ENCODE measurements at regions of chr12 and their contacts with region 1.

Region 1: DNA sequence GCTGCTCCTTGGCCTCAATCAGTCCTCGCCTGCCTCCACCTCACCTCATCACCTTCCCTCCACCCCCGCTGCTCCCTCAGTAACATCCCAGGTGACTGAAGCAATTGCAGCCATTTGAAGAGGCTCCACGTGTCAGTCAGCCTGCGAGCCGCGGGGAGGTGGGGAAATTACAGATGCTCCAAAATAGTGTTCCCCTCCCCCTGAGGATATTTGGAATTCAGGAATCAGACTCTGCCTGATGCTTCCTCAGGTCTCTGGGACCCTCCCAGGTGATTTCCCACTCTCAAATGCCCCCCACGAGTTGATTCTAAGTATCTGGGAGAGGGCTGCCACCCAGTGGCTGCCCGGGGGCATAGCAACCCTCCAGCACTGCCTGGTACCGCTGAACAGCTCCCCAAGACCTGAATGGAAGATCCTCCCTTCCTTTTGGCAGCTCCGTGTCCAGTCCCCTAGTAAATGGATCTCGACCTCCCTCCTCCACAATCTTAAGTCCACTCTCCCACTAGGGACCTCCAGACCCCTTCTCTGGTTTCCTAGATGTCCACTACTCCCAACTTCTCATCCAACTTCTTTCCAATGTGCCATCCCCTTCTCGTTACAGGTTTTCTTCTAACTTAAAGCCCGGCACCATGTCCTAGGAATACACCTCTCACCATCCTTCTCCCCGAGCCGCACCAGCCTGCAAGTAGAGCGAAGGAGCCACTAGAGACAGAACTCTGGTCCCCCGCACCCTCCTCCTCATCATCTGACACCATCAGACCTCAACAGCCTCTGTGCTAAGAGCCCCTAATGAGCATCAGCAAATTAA is 1.4 kb upstream of the ASIC1 start:
- DNase-seq: peak; percentile 70
- H3K4me3 Mint-ChIP-seq: peak overlapping the region; percentile 39
- H3K27ac Mint-ChIP-seq: no peak overlapping the region
- H3K4me1 Mint-ChIP-seq: peaks cover 33% of the 10 kb centered on the region
- H3K27me3 Mint-ChIP-seq: peaks cover 41% of the 10 kb centered on the region

Region 2: GRCh38 chr12:49866859-49867579 is 189.0 kb before region 1 on chr12:
- CTCF ChIA-PET with region 1: interaction called, 9 read pairs
- intact Hi-C with region 1: loop called (anchors 1 kb)
- DNase-seq: peak; percentile 86
- H3K4me3 Mint-ChIP-seq: no peak overlapping the region
- H3K27ac Mint-ChIP-seq: no peak overlapping the region
- H3K4me1 Mint-ChIP-seq: no peaks in the 10 kb centered on the region
- H3K27me3 Mint-ChIP-seq: no peaks in the 10 kb centered on the region

Region 3: DNA sequence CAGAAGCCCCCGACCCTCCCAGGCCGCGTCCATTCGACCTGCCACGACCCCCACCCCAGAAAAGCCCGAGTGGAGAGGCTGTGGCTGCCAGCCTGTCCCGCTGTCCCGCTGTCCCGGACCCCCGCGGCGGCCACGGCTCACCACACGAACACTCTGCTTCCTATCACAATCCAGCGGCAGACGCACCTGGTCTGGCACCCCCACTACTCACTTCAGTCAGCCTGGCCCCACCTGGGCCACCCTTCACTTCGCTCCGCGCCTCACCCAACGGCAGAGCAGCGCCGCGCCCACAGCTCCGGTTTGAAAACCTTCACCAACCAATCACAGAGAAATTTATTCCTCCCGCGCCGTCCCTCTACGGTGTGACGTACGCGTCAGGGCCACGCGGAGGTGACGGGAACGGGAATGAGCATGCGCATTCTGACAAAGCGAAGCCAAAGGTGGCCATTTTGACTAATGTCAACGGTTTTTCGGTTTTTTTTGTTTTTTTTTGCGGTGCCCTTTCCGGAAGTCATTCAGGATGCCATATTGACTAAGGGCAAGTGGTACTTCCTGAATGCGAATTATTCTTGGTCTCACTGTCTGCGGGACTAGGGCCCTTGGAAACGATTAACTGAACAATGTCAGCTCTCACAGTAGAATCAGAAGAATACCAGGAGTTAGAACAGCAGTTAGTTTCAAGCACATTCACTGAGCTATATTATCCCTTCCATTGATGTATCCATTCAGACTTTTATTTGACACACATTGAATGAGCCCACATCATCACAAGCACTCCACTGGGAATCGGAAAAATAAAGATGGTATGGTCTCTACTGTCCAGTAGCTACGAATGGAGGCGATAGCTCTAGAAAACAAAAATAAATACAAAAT is 30.6 kb before region 1 on chr12 and contains the start of gene RACGAP1:
- CTCF ChIA-PET with region 1: interaction called, 10 read pairs
- intact Hi-C with region 1: loop called (anchors 1 kb)
- DNase-seq: peak; percentile 98
- H3K4me3 Mint-ChIP-seq: peak within 1 kb of the TSS; percentile 92
- H3K27ac Mint-ChIP-seq: peak within 1 kb of the TSS; percentile 94
- H3K4me1 Mint-ChIP-seq: peaks cover 12% of the 10 kb centered on the region
- H3K27me3 Mint-ChIP-seq: no peaks in the 10 kb centered on the region
- total RNA-seq, gene RACGAP1: 156 to 159 TPM

Region 4: DNA sequence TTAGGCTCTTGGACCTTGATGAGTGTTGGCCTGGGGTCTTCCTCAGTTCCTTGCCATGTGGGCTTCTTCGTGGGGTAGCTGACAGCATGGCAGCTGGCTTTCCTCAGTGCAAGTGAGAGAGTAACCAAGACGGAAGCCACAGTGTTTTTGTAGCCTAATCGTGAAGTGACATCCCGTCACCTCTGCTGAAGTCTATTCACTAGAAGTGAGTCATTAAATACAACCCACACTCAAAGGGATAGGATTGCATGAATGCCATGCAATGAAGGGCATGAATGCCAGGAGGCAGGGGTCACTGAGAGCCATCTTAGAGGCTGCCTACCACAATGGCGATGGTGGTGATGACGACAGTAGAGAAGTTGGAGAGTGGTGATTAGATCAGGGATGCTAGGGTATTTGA is 12.2 kb before region 1 on chr12:
- CTCF ChIA-PET with region 1: interaction called, 182 read pairs
- intact Hi-C with region 1: loop called (anchors 1 kb)
- DNase-seq: no peak
- H3K4me3 Mint-ChIP-seq: no peak overlapping the region
- H3K27ac Mint-ChIP-seq: no peak overlapping the region
- H3K4me1 Mint-ChIP-seq: peaks cover 5% of the 10 kb centered on the region
- H3K27me3 Mint-ChIP-seq: no peaks in the 10 kb centered on the region

Region 5: GRCh38 chr12:50066433-50066832 is 10.4 kb after region 1 on chr12:
- CTCF ChIA-PET with region 1: interaction called, 51 read pairs
- intact Hi-C with region 1: loop called (anchors 1 kb)
- DNase-seq: no peak
- H3K4me3 Mint-ChIP-seq: no peak overlapping the region
- H3K27ac Mint-ChIP-seq: no peak overlapping the region
- H3K4me1 Mint-ChIP-seq: peaks cover 4% of the 10 kb centered on the region
- H3K27me3 Mint-ChIP-seq: no peaks in the 10 kb centered on the region

Region 6: GRCh38 chr12:50132505-50133135 is 76.6 kb after region 1 on chr12:
- CTCF ChIA-PET with region 1: no interaction called
- intact Hi-C with region 1: no loop called
- DNase-seq: no peak
- H3K4me3 Mint-ChIP-seq: no peak overlapping the region
- H3K27ac Mint-ChIP-seq: peak overlapping the region; percentile 81
- H3K4me1 Mint-ChIP-seq: peaks cover 8% of the 10 kb centered on the region
- H3K27me3 Mint-ChIP-seq: no peaks in the 10 kb centered on the region

Region 7: GRCh38 chr12:50142993-50143392 is 87.0 kb after region 1 on chr12:
- CTCF ChIA-PET with region 1: no interaction called
- intact Hi-C with region 1: no loop called
- DNase-seq: no peak
- H3K4me3 Mint-ChIP-seq: no peak overlapping the region
- H3K27ac Mint-ChIP-seq: no peak overlapping the region
- H3K4me1 Mint-ChIP-seq: no peaks in the 10 kb centered on the region
- H3K27me3 Mint-ChIP-seq: no peaks in the 10 kb centered on the region

Region 8: DNA sequence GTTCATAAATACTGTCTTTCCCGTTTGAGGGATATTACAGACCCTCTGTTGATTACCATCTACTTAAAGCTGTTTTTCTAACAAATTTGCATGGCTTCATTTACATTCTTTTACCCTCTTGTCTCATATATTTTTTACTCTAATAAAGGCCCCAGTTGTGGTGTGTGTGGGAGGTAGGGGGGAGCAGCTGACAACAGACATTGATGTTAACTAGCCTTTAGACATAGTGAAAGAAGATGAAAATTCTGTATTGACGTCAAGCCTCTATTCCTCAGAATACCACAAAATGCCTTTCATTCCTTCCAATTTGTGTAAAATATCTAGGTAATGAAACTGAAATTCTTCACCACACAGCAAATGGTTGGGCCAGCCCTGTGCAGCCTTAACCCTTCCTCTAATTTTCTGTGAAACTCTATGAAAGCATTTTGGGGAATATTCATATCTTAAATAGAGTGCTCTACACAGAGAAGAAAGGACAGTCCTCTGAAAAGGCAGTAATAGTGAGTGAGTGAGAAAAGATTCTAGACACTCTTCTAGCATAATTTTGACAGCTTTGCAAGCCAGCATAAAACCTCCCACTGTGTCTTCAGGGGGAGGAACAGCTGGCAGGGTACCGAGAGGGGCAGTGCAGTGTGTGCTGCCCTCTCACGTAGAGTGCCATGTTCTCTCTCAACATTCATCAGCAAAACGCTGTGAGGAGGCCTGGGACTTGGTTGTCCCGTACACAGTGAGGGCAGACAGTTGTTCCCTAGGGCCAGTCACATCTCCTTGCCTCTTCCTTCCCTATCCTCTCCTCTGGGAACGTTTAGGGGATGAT is 131.3 kb after region 1 on chr12:
- CTCF ChIA-PET with region 1: no interaction called
- intact Hi-C with region 1: no loop called
- DNase-seq: peak; percentile 45
- H3K4me3 Mint-ChIP-seq: no peak overlapping the region
- H3K27ac Mint-ChIP-seq: peak overlapping the region; percentile 61
- H3K4me1 Mint-ChIP-seq: peaks cover 29% of the 10 kb centered on the region
- H3K27me3 Mint-ChIP-seq: no peaks in the 10 kb centered on the region